Breast epithelium (tissue), 4 donors: ENCODE measurements at regions of chr7 and their contacts with region 1.

Region 1: GRCh38 chr7:82373926-82374640 is 69.5 kb downstream of the CACNA2D1 start:
- DNase-seq: no peak
- H3K4me3 ChIP-seq: no peak overlapping the region
- H3K27ac ChIP-seq: no peak overlapping the region
- H3K4me1 ChIP-seq: no peaks in the 10 kb centered on the region
- H3K27me3 ChIP-seq: no peaks in the 10 kb centered on the region
- CTCF ChIP-seq: no peak
- POLR2A ChIP-seq: no peak

Region 2: GRCh38 chr7:82410461-82410860 is 36.4 kb after region 1 on chr7:
- intact Hi-C with region 1: loop called (anchors 2 kb)
- DNase-seq: no peak
- H3K4me3 ChIP-seq: peak overlapping the region in 2 of 3 donors; percentile 30
- H3K27ac ChIP-seq: no peak overlapping the region
- H3K4me1 ChIP-seq: no peaks in the 10 kb centered on the region
- H3K27me3 ChIP-seq: no peaks in the 10 kb centered on the region
- CTCF ChIP-seq: no peak
- POLR2A ChIP-seq: no peak